ENCODE measurements at regions of chr22 and their contacts with region 1.

Region 1: GRCh38 chr22:42169055-42169469 is 38.5 kb upstream of the CYP2D6 start:
- DNase-seq: peak; percentile 71
- ATAC-seq: peak; percentile 85
- H3K4me3 ChIP-seq: no peak overlapping the region
- H3K27ac ChIP-seq: no peak overlapping the region
- H3K4me1 ChIP-seq: peaks cover 26% of the 10 kb centered on the region
- H3K27me3 ChIP-seq: no peaks in the 10 kb centered on the region
- CTCF ChIP-seq: peak; percentile 88
- EP300 ChIP-seq: no peak
- POLR2A ChIP-seq: no peak
- RAD21 ChIP-seq: peak; percentile 97

Region 2: DNA sequence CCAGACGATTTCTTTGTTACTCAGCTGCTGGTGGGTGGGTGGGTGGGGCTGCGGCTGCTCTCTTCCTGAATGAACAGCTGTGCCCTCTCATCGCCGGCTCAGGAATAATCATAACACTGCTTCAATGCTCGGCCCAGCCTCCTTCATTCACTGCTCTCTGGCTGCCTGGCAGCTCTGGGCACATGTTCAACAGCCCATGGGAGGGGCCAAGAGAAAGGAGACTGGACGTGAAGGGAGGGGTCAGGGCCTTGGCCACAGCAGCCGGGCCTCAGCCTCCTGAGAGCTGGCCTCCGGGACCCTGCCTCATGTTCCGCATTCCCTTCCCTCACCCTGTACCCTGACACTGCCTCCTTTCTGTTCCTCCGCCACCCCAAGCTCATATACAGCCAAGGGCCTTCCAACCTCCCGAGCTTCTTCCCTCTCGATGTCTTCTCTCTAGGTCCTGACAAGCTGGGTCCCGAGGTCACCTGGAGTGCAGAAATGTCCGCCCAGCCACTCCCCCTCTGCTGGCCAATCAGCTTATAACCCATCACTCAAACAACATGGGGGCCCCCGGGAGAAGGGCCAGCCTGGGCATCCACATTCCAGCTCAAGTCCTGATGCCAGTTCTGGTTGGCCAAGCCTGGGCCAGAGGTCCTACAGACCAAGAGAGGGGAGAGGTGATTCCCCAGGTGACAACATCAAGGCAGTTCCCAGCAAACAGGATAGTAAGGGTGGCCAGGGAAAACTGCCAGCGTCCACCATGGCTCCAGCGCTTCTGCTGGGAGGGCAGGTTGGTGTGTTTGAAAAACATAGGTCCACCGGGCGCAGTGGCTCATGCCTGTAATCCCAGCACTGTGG is 611.4 kb before region 1 on chr22:
- CTCF ChIA-PET with region 1: no interaction called
- POLR2A ChIA-PET with region 1: no interaction called
- in situ Hi-C with region 1: no loop called
- intact Hi-C with region 1: no loop called
- DNase-seq: peak; percentile 70
- ATAC-seq: peak; percentile 46
- H3K4me3 ChIP-seq: peak overlapping the region; percentile 27 to 72 (median 56); a peak in 5 of 6 replicates
- H3K27ac ChIP-seq: peak overlapping the region; percentile 8
- H3K4me1 ChIP-seq: peaks cover 89% of the 10 kb centered on the region
- H3K27me3 ChIP-seq: peaks cover 0 to 25% of the 10 kb centered on the region in 2 experiments; a peak in 4 of 5 replicates
- CTCF ChIP-seq: 0 out of 2 replicates have a peak, but pooled peaks have one; percentile 10
- EP300 ChIP-seq: 0 out of 4 replicates have a peak, but pooled peaks of 1 of the 2 experiments have one; percentile 26
- POLR2A ChIP-seq: 0 out of 4 replicates have a peak, but pooled peaks of 1 of the 2 experiments have one; percentile 25
- RAD21 ChIP-seq: no peak

Region 3: GRCh38 chr22:42188808-42189447 is 19.9 kb after region 1 on chr22:
- CTCF ChIA-PET with region 1: no interaction called
- POLR2A ChIA-PET with region 1: no interaction called
- in situ Hi-C with region 1: no loop called
- intact Hi-C with region 1: no loop called
- DNase-seq: no peak
- ATAC-seq: no peak
- H3K4me3 ChIP-seq: no peak overlapping the region
- H3K27ac ChIP-seq: no peak overlapping the region
- H3K4me1 ChIP-seq: peaks cover 15% of the 10 kb centered on the region
- H3K27me3 ChIP-seq: no peaks in the 10 kb centered on the region
- CTCF ChIP-seq: no peak
- EP300 ChIP-seq: no peak
- POLR2A ChIP-seq: no peak
- RAD21 ChIP-seq: no peak

Region 4: DNA sequence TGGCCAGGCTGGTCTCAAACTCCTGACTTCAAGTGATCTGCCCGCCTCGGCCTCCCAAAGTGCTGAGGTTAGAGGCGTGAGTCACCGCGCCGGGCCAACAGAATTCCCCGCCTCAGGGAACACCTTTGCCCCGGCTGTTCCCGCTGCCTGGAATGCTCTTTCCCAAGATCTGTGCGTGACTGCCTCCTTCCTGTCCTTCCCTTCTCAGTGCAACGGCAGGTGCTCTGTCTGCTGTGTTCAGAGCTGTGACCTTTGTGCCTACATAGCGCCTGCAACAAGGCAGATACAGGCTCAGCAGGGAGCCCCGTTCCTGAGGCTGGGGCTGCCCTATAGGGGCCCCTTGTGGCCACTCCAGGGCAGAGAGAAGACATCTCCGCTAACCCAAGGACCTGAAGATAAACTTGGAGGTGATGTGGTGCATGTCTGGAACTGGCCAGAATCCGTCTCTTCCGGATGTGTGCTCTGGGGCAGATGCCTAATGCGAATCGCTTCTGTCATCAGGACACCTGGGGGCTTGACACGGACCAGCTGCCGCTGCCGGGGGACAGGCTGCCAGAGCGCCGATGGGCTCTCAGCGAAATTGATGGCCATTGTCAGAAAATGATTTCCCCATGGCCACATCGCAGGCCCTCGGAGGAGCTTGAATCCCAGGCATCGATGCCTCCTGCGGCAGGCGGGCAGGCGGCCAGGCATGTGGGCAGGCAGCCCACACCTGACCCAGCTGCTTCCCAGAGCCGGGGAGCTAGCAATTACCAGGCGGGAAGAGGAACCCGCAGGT is 144.9 kb after region 1 on chr22:
- CTCF ChIA-PET with region 1: interaction called, 46 read pairs
- POLR2A ChIA-PET with region 1: no interaction called
- in situ Hi-C with region 1: loop called (anchors 5 kb)
- intact Hi-C with region 1: loop called (anchors 1 kb)
- DNase-seq: peak; percentile 95
- ATAC-seq: peak; percentile 95
- H3K4me3 ChIP-seq: peak overlapping the region in 1 of 3 experiments; percentile 19; a peak in 1 of 6 replicates
- H3K27ac ChIP-seq: no peak overlapping the region
- H3K4me1 ChIP-seq: peaks cover 39% of the 10 kb centered on the region
- H3K27me3 ChIP-seq: peaks cover 4 to 28% of the 10 kb centered on the region in 2 experiments; a peak in 4 of 5 replicates
- CTCF ChIP-seq: peak; percentile 93
- EP300 ChIP-seq: peak; percentile 67 to 80; a peak in 2 of 4 replicates
- POLR2A ChIP-seq: no peak
- RAD21 ChIP-seq: peak; percentile 96

Region 5: GRCh38 chr22:42444077-42444904 is 275.2 kb after region 1 on chr22:
- CTCF ChIA-PET with region 1: interaction called, 5 read pairs
- POLR2A ChIA-PET with region 1: no interaction called
- in situ Hi-C with region 1: loop called (anchors 5 kb)
- intact Hi-C with region 1: no loop called
- DNase-seq: peak; percentile 34
- ATAC-seq: peak; percentile 81
- H3K4me3 ChIP-seq: peak overlapping the region in 1 of 3 experiments; percentile 57; a peak in 1 of 6 replicates
- H3K27ac ChIP-seq: no peak overlapping the region
- H3K4me1 ChIP-seq: peaks cover 20% of the 10 kb centered on the region
- H3K27me3 ChIP-seq: peaks cover 2 to 37% of the 10 kb centered on the region in 2 experiments; a peak in 4 of 5 replicates
- CTCF ChIP-seq: peak; percentile 84
- EP300 ChIP-seq: no peak
- POLR2A ChIP-seq: no peak
- RAD21 ChIP-seq: peak; percentile 61; the same call in 1 of the 2 replicates

Measured in HepG2 (cell line).